ENCODE measurements at regions of chr12 and their contacts with region 1.

Region 1: GRCh38 chr12:105235732-105236476 is at the start of gene APPL2:
- DNase-seq: peak; percentile 86
- H3K4me3 Mint-ChIP-seq: peak within 1 kb of the TSS; percentile 85
- H3K27ac Mint-ChIP-seq: peak within 1 kb of the TSS; percentile 86
- H3K4me1 Mint-ChIP-seq: peaks cover 37% of the 10 kb centered on the region
- H3K27me3 Mint-ChIP-seq: no peaks in the 10 kb centered on the region
- total RNA-seq, gene APPL2: 12.7 to 13.5 TPM

Region 2: GRCh38 chr12:104137913-104138796 is 1097.7 kb before region 1 on chr12 and contains the start of gene NFYB:
- CTCF ChIA-PET with region 1: no interaction called
- intact Hi-C with region 1: loop called (anchors 5 kb)
- DNase-seq: peak; percentile 95
- H3K4me3 Mint-ChIP-seq: peak within 1 kb of the TSS; percentile 84
- H3K27ac Mint-ChIP-seq: peak within 1 kb of the TSS; percentile 84
- H3K4me1 Mint-ChIP-seq: peaks cover 14% of the 10 kb centered on the region
- H3K27me3 Mint-ChIP-seq: no peaks in the 10 kb centered on the region
- total RNA-seq, gene NFYB: 23.3 to 28.3 TPM

Region 3: GRCh38 chr12:104462931-104463339 is 773.0 kb before region 1 on chr12:
- CTCF ChIA-PET with region 1: no interaction called
- intact Hi-C with region 1: loop called (anchors 10 kb)
- DNase-seq: peak; percentile 65
- H3K4me3 Mint-ChIP-seq: peak overlapping the region; percentile 49
- H3K27ac Mint-ChIP-seq: peak overlapping the region; percentile 84
- H3K4me1 Mint-ChIP-seq: peaks cover 75% of the 10 kb centered on the region
- H3K27me3 Mint-ChIP-seq: no peaks in the 10 kb centered on the region

Region 4: GRCh38 chr12:104986022-104986941 is 249.6 kb before region 1 on chr12 and contains the start of gene NOPCHAP1:
- CTCF ChIA-PET with region 1: no interaction called
- intact Hi-C with region 1: loop called (anchors 5 kb)
- DNase-seq: peak; percentile 91
- H3K4me3 Mint-ChIP-seq: peak within 1 kb of the TSS; percentile 86
- H3K27ac Mint-ChIP-seq: peak within 1 kb of the TSS; percentile 17
- H3K4me1 Mint-ChIP-seq: peaks cover 40% of the 10 kb centered on the region
- H3K27me3 Mint-ChIP-seq: no peaks in the 10 kb centered on the region
- total RNA-seq, gene NOPCHAP1: 30.8 to 33.4 TPM

Region 5: GRCh38 chr12:105212438-105212837 is 23.5 kb before region 1 on chr12:
- CTCF ChIA-PET with region 1: no interaction called
- intact Hi-C with region 1: no loop called
- DNase-seq: no peak
- H3K4me3 Mint-ChIP-seq: no peak overlapping the region
- H3K27ac Mint-ChIP-seq: no peak overlapping the region
- H3K4me1 Mint-ChIP-seq: no peaks in the 10 kb centered on the region
- H3K27me3 Mint-ChIP-seq: no peaks in the 10 kb centered on the region

Region 6: GRCh38 chr12:105330283-105330930 is 94.5 kb after region 1 on chr12 and contains the start of gene C12orf75:
- CTCF ChIA-PET with region 1: no interaction called
- intact Hi-C with region 1: loop called (anchors 1 kb)
- DNase-seq: peak; percentile 86
- H3K4me3 Mint-ChIP-seq: peak within 1 kb of the TSS; percentile 76
- H3K27ac Mint-ChIP-seq: peak within 1 kb of the TSS; percentile 14
- H3K4me1 Mint-ChIP-seq: peaks cover 35% of the 10 kb centered on the region
- H3K27me3 Mint-ChIP-seq: no peaks in the 10 kb centered on the region
- total RNA-seq, gene C12orf75: 41.1 to 48.5 TPM

Region 7: DNA sequence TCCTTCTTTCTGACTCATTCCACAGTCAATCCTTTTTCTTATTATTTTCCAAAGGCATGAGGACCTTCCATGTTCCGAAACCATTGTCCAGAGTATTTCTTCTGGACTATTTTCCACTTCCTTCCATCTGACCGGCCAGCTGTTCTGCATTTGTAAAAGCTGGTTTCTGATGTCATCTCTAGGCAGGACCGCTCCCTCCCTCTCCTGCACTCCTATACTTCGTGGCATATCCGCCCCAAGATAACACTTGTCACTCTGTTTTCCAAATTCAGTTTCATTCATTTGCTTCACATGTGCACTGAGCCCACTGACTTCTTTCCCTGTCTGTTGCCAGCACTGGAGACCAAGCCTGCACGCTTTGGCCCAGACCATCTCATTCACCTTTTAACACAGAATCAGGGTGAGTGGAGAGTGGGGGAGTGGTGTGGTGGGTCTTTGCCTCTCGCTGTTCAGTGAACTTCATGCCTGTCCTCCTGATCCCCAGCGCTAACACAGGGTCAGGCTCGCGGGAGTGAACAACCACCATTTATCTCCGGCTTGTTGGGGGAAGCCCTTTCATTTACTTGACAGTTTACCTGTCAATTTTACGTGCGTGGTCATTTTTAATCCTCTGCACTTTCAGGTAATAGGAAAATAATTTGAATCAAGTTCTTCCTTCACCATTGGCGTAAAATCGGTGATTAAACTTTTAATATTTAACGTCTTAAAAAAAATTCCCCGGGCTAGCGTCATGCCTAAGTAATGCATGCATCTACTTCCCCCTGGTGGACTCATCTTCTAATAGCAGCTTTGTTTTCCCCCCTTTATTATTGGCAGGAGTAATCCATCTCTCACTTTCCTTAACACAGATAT is 147.1 kb after region 1 on chr12:
- CTCF ChIA-PET with region 1: interaction called, 3 read pairs
- intact Hi-C with region 1: loop called (anchors 2 kb)
- DNase-seq: peak; percentile 31
- H3K4me3 Mint-ChIP-seq: no peak overlapping the region
- H3K27ac Mint-ChIP-seq: no peak overlapping the region
- H3K4me1 Mint-ChIP-seq: no peaks in the 10 kb centered on the region
- H3K27me3 Mint-ChIP-seq: no peaks in the 10 kb centered on the region

Region 8: DNA sequence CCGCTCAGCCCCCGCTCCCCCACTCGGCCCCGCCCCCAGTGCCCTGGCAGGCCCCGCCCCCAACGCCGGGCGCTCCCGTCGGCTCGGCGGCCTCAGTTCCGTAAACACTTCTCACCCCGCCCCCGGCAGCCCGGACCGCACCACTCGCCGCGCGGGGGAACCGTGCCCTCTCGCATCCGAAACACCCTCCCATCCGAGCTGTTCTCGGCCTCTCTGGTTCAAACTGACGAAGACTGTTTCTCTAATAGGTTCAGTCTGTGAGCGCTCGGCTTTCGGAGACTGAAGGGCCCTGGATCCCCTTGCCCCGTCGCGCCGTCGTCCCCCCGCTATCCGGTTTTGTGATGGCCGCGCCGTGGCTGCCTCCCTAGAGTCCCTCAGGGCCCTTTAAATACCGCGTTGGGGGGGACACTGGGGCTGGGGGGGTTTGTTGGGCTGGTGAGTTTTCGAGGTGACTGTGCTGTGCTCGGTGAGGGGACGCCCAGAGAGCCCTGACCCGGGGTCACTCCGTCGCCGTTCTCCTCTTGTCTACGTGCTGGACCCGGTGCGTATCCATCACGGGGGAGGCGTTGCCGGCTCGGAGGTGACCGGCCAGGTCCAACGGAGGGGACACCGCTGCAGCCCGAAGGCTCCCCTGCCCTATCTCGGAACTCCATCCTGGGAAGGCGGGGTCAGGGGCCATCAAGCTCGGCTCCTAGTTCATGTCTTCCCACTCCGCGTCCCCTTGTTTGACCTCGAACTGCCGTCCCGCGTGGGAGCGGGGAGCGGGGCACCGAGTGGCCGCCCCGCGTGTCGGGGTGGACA is 1066.7 kb after region 1 on chr12 and contains the start of gene TCP11L2:
- CTCF ChIA-PET with region 1: no interaction called
- intact Hi-C with region 1: loop called (anchors 10 kb)
- DNase-seq: peak; percentile 88
- H3K4me3 Mint-ChIP-seq: peak within 1 kb of the TSS; percentile 93
- H3K27ac Mint-ChIP-seq: peak within 1 kb of the TSS; percentile 99
- H3K4me1 Mint-ChIP-seq: peaks cover 55% of the 10 kb centered on the region
- H3K27me3 Mint-ChIP-seq: no peaks in the 10 kb centered on the region
- total RNA-seq, gene TCP11L2: 9.2 to 10.3 TPM